ENCODE measurements at regions of chr1 and their contacts with region 1.

Region 1: GRCh38 chr1:45303582-45304310 is 22.9 kb upstream of the HPDL start:
- DNase-seq: peak; percentile 97
- H3K4me3 Mint-ChIP-seq: peak overlapping the region; percentile 96
- H3K27ac Mint-ChIP-seq: peak overlapping the region; percentile 97
- H3K4me1 Mint-ChIP-seq: peaks cover 39% of the 10 kb centered on the region
- H3K27me3 Mint-ChIP-seq: no peaks in the 10 kb centered on the region

Region 2: GRCh38 chr1:44799770-44800584 is 503.8 kb before region 1 on chr1 and contains the start of gene PLK3:
- intact Hi-C with region 1: loop called (anchors 5 kb)
- DNase-seq: peak; percentile 99
- H3K4me3 Mint-ChIP-seq: peak within 1 kb of the TSS; percentile 99
- H3K27ac Mint-ChIP-seq: peak within 1 kb of the TSS; percentile 100
- H3K4me1 Mint-ChIP-seq: peaks cover 35% of the 10 kb centered on the region
- H3K27me3 Mint-ChIP-seq: no peaks in the 10 kb centered on the region
- total RNA-seq, gene PLK3: 190 and 205 TPM in 2 replicates

Region 3: GRCh38 chr1:45011837-45012638 is 291.7 kb before region 1 on chr1 and contains the start of gene UROD:
- intact Hi-C with region 1: loop called (anchors 1 kb)
- DNase-seq: peak; percentile 97
- H3K4me3 Mint-ChIP-seq: peak within 1 kb of the TSS; percentile 85
- H3K27ac Mint-ChIP-seq: peak within 1 kb of the TSS; percentile 91
- H3K4me1 Mint-ChIP-seq: peaks cover 52% of the 10 kb centered on the region
- H3K27me3 Mint-ChIP-seq: no peaks in the 10 kb centered on the region
- total RNA-seq, gene UROD: 96.0 and 97.7 TPM in 2 replicates

Region 4: DNA sequence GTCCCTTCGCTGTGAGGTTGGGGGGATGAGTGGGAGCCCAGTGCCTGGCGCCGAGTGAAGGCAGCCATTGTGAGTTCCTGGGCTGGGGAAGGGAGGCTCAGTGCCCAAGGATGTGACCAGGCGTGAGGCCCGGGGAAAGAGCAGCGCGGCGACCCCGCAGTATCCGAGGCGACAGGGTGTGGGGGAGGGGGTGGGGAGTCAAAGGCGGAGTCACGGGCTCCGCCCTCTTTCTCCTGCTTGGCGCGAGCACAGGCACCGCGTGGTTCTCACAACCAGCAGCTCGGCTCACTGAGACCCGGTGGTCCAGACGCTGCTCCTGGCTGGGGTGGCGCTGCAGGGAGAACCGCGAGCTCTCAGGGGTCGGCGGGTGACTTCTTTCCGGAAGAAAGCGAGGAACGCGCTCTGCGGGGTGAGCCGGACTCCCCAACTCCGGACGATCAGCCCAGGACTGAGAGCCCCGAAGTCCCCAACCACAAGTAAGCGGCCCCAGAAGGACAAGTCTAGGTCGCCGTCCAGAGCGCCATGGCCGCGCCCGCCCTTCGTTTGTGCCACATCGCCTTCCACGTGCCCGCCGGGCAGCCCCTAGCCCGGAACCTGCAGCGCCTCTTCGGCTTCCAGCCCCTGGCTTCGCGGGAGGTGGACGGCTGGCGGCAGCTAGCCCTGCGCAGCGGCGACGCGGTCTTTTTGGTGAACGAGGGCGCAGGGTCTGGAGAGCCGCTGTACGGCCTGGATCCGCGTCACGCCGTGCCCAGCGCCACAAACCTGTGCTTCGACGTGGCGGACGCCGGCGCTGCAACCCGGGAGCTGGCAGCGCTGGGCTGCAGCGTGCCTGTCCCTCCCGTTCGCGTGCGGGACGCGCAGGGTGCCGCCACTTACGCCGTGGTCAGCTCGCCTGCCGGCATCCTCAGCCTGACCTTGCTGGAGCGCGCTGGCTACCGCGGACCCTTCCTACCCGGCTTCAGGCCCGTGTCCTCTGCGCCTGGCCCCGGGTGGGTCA is 23.2 kb after region 1 on chr1 and contains the start of gene HPDL:
- intact Hi-C with region 1: loop called (anchors 2 kb)
- DNase-seq: peak; percentile 86
- H3K4me3 Mint-ChIP-seq: peak within 1 kb of the TSS; percentile 86
- H3K27ac Mint-ChIP-seq: peak within 1 kb of the TSS; percentile 79
- H3K4me1 Mint-ChIP-seq: peaks cover 23% of the 10 kb centered on the region
- H3K27me3 Mint-ChIP-seq: no peaks in the 10 kb centered on the region
- total RNA-seq, gene HPDL: 39.6 and 39.8 TPM in 2 replicates

Region 5: DNA sequence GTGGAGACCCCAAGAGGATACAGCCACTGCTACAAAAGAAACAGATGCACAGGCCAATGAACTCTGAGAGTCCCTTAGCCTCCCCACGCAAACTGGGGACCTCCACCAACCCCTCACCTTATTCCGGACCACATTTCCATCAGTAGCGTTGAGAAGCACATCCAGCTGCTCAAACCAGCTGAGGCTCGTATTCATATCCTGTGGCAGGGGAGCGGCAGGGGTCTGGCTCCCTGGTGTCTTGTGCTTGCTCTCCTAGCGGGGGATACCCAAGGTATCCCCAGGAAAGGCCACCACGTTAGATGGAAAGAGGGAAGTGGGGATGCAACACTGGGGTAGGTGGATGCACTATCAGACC is 195.6 kb after region 1 on chr1:
- intact Hi-C with region 1: loop called (anchors 1 kb)
- DNase-seq: peak; percentile 74
- H3K4me3 Mint-ChIP-seq: peak overlapping the region; percentile 95
- H3K27ac Mint-ChIP-seq: peak overlapping the region; percentile 90
- H3K4me1 Mint-ChIP-seq: peaks cover 30% of the 10 kb centered on the region
- H3K27me3 Mint-ChIP-seq: no peaks in the 10 kb centered on the region